Dendritic cell treated with granulocyte-macrophage colony-stimulating factor and Interleukin-4, amounts not matched to agents 40 ng/mL and 50 ng/mL, for 4 days (primary cell): ENCODE measurements at regions of chr3 and their contacts with region 1.

Region 1: GRCh38 chr3:112642912-112643506 is 2.1 kb upstream of the CCDC80 start:
- H3K4me3 Mint-ChIP-seq: peak overlapping the region; percentile 58
- H3K27ac Mint-ChIP-seq: peak overlapping the region; percentile 20
- H3K4me1 Mint-ChIP-seq: peaks cover 29% of the 10 kb centered on the region
- H3K27me3 Mint-ChIP-seq: peaks cover 17% of the 10 kb centered on the region

Region 2: DNA sequence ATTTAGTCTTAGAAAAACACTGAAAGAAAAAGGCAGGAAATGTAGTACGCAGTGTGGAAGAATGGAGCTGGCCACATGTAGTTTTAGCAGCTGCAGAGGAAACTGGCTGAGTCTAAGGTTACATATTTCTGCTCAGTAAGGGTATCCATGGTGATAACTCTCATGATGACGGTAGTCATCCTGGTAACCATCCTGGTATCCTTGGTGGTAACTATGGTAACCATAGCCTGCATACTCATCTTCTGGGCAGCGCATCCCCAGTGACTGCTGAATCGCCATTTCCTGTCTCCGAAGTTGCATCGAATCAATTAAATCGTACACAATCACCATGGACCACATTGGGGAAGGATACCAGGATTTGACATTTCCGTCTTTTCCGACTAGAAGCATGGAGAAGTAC is 37.7 kb before region 1 on chr3:
- intact Hi-C with region 1: no loop called
- H3K4me3 Mint-ChIP-seq: no peak overlapping the region
- H3K27ac Mint-ChIP-seq: no peak overlapping the region
- H3K4me1 Mint-ChIP-seq: no peaks in the 10 kb centered on the region
- H3K27me3 Mint-ChIP-seq: peaks cover 6% of the 10 kb centered on the region

Region 3: DNA sequence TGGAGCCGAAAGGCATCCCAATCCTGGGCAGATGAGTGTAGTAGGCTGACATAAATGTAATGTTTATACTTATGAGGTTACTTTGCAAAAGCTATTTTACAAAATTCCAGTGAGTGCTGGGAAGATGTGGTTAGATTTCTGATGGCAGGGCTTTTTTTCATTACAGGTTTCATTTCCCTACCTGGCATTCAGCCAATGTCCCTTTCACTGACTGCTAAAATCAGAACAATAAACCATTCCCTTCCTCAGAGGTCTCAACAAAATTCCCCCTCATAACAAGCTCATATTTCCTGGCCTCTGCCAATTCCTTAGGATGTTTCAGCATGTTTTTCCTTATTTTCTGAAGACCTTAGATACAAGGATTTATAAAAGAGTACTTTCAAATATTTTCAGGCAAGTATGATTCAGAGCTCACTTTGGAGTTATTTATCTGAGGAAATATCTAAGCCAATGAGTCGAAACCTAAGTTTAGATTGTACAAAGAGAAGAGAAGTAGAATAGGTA is 38.9 kb after region 1 on chr3:
- intact Hi-C with region 1: loop called (anchors 5 kb)
- H3K4me3 Mint-ChIP-seq: no peak overlapping the region
- H3K27ac Mint-ChIP-seq: peak overlapping the region; percentile 73
- H3K4me1 Mint-ChIP-seq: peaks cover 44% of the 10 kb centered on the region
- H3K27me3 Mint-ChIP-seq: no peaks in the 10 kb centered on the region

Region 4: DNA sequence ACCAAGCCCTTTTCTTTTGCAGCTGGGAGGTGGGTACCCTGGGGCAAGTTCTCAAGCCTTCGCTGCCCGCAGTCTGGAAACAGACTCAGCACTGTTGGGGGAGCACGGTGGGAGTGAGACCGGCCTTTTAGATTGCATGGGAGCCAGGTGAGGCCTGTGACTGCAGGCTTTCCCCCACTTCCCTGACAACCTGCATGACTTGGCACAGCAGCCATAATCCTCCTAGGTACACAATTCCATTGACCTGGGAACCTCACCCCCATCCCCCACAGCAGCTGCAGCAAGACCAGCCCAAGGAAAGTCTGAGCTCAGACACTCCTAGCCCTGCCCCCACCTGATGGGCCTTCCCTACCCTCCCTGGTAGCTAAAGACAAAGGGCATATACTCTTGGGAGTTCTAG is 50.2 kb after region 1 on chr3:
- intact Hi-C with region 1: loop called (anchors 5 kb)
- H3K4me3 Mint-ChIP-seq: no peak overlapping the region
- H3K27ac Mint-ChIP-seq: peak overlapping the region; percentile 26
- H3K4me1 Mint-ChIP-seq: peaks cover 27% of the 10 kb centered on the region
- H3K27me3 Mint-ChIP-seq: no peaks in the 10 kb centered on the region

Region 5: DNA sequence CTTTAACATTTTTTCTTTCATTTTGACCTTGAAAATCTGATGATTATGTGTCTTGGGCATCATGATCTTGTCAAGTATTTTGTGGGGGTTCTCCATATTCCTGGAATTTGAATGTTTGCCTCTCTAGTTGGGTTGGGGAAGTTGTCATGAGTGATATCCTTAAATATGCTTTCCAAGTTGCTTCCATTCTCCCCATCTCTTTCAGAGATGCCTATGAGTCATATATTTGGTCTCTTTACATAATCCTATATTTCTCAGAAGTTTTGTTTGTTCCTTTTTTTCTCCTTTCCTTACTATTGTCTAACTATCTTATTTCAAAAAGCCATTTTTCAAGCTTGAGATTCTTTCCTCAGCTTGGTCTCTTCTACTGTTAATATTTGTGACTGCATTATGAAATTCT is 66.9 kb after region 1 on chr3:
- intact Hi-C with region 1: no loop called
- H3K4me3 Mint-ChIP-seq: no peak overlapping the region
- H3K27ac Mint-ChIP-seq: peak overlapping the region; percentile 26
- H3K4me1 Mint-ChIP-seq: peaks cover 23% of the 10 kb centered on the region
- H3K27me3 Mint-ChIP-seq: peaks cover 5% of the 10 kb centered on the region

Region 6: GRCh38 chr3:112734718-112735350 is 91.8 kb after region 1 on chr3:
- intact Hi-C with region 1: loop called (anchors 1 kb)
- H3K4me3 Mint-ChIP-seq: no peak overlapping the region
- H3K27ac Mint-ChIP-seq: no peak overlapping the region
- H3K4me1 Mint-ChIP-seq: peaks cover 30% of the 10 kb centered on the region
- H3K27me3 Mint-ChIP-seq: no peaks in the 10 kb centered on the region

Region 7: GRCh38 chr3:112966633-112967032 is 323.6 kb after region 1 on chr3:
- intact Hi-C with region 1: loop called (anchors 2 kb)
- H3K4me3 Mint-ChIP-seq: peak overlapping the region; percentile 74
- H3K27ac Mint-ChIP-seq: peak overlapping the region; percentile 89
- H3K4me1 Mint-ChIP-seq: peaks cover 90% of the 10 kb centered on the region
- H3K27me3 Mint-ChIP-seq: no peaks in the 10 kb centered on the region

Region 8: DNA sequence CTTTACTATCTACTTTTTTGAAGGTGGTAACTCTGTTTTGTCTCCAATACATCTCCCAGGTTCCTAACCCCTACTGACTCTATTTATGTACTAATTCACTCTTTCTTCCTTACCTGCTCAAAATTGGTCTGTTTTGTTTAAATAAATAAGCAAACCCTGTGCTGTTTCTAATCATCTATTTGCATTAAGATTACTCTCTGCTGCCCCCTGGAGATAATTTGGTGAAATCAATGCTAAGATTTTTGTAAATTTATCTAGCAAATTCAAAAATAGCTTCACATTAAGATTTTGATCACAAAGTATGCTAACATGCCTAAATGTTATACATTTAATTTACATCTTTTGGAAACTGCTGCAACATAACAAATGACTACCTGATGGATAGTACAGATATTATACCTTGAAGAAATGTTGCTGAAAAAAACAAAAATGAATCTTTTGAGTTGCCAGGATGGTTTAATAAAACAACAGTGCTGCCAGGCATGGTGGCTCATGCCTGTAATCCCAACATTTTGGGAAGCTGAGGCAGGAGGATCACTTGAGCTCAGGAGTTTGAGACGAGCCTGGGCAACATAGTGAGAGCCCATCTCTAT is 336.3 kb after region 1 on chr3:
- intact Hi-C with region 1: loop called (anchors 2 kb)
- H3K4me3 Mint-ChIP-seq: no peak overlapping the region
- H3K27ac Mint-ChIP-seq: no peak overlapping the region
- H3K4me1 Mint-ChIP-seq: peaks cover 59% of the 10 kb centered on the region
- H3K27me3 Mint-ChIP-seq: no peaks in the 10 kb centered on the region